WTC11 (cell line): ENCODE measurements at regions of chr17 and their contacts with region 1.

Region 1: GRCh38 chr17:59914274-59914854 is 21.4 kb downstream of the RPS6KB1 start:
- DNase-seq: no peak
- ATAC-seq: no peak
- H3K4me3 Mint-ChIP-seq: no peak overlapping the region
- H3K27ac Mint-ChIP-seq: no peak overlapping the region
- H3K4me1 Mint-ChIP-seq: no peaks in the 10 kb centered on the region
- H3K27me3 Mint-ChIP-seq: no peaks in the 10 kb centered on the region
- CTCF ChIP-seq: peak; percentile 34

Region 2: GRCh38 chr17:59753522-59754467 is 160.6 kb before region 1 on chr17:
- CTCF ChIA-PET with region 1: interaction called, 10 read pairs
- POLR2A ChIA-PET with region 1: no interaction called
- DNase-seq: no peak
- ATAC-seq: peak; percentile 90
- H3K4me3 Mint-ChIP-seq: no peak overlapping the region
- H3K27ac Mint-ChIP-seq: no peak overlapping the region
- H3K4me1 Mint-ChIP-seq: peaks cover 3% of the 10 kb centered on the region
- H3K27me3 Mint-ChIP-seq: no peaks in the 10 kb centered on the region
- CTCF ChIP-seq: peak; percentile 69

Region 3: GRCh38 chr17:59892924-59893676 is 21.3 kb before region 1 on chr17 and contains the starts of genes RPS6KB1 and TUBD1:
- CTCF ChIA-PET with region 1: interaction called, 10 read pairs
- POLR2A ChIA-PET with region 1: no interaction called
- DNase-seq: peak; percentile 94
- ATAC-seq: peak; percentile 99
- H3K4me3 Mint-ChIP-seq: peak within 1 kb of the TSS; percentile 94
- H3K27ac Mint-ChIP-seq: peak within 1 kb of the TSS; percentile 77
- H3K4me1 Mint-ChIP-seq: peaks cover 14% of the 10 kb centered on the region
- H3K27me3 Mint-ChIP-seq: no peaks in the 10 kb centered on the region; the same call in 1 of the 2 replicates
- CTCF ChIP-seq: no peak
- total RNA-seq, gene RPS6KB1: 21.6 to 27.1 TPM (median 22.5 TPM) in 3 replicates
- total RNA-seq, gene TUBD1: 12.0 to 21.4 TPM (median 16.6 TPM) in 3 replicates

Region 4: DNA sequence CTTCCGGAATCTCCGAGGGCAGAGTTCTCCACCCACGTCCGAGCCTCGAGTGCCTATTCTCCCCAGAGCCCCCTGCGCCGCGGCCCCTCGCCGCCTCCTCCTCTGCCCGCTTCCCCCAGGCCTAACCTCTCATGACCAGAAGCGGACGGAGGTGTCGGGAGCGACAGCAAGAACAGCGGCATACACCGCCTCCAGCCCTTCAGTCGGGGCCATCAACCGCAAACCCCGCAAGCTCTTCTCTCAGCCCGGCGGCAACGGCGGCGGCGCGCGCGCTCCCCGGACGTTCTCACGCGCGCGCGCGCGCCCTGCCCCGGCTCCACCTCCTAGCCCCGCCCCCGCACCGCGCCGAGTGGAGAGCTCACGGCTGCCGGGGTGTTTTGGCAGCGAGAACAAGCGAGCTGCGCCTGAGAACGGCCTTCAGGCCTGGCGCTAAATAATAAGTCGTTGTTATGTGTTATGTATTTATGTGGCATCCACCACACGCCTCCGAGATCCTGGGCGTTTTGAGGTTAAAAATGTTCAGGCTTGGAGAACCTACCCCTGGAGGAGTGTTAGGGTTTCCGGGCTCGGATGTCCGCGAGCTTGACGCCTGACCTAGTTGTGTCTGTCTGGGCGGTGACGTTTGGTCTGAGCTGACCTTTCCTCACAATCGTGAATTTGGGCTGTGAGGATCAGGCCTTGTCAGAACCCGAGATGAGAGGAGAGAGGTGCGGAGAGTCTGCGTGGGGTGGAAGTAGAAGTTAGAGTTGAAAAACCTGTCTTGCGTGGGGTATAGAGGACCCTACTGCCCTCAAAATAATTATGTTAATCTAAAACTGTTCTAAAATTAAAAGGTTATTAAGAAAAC is 50.3 kb after region 1 on chr17 and contains the start of gene RNFT1:
- CTCF ChIA-PET with region 1: interaction called, 12 read pairs
- POLR2A ChIA-PET with region 1: no interaction called
- DNase-seq: peak; percentile 86
- ATAC-seq: peak; percentile 92
- H3K4me3 Mint-ChIP-seq: peak within 1 kb of the TSS; percentile 79
- H3K27ac Mint-ChIP-seq: peak within 1 kb of the TSS; percentile 67; the same call in 1 of the 2 replicates
- H3K4me1 Mint-ChIP-seq: peaks cover 11% of the 10 kb centered on the region
- H3K27me3 Mint-ChIP-seq: peaks cover 25% of the 10 kb centered on the region
- CTCF ChIP-seq: no peak
- total RNA-seq, gene RNFT1: 4.0 to 4.9 TPM (median 4.8 TPM) in 3 replicates